CD8-positive, alpha-beta memory T cell (primary cell): ENCODE measurements at regions of chr15 and their contacts with region 1.

Region 1: DNA sequence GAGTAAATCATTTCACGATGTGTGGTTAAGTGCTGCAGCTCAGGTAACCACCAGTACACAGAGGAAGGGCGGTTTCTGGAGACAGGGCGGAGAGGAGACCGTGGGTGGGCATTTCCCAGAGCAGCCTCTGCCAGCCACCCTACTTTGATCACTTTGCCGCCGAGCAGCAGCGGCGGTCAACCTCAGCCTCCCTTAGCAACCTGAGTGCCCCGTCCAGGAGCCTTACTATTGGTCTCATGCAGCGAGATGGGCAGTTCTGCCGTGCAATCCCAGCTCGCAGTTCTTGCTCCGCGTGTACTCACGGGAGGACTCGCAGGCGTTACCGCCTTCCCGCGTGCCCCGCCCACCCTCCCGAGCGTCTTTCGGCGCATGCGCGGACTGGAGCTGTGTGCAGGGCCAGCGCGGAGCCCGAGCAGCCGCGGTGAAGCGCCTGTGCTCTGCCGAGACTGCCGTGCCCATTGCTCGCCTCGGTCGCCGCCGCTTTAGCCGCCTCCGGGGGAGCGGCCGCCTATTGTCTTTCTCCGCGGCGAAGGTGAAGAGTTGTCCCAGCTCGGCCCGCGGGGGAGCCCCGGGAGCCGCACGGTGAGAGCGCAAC is at the start of gene AKAP13:
- DNase-seq: peak; percentile 89 to 97 (median 94)
- H3K4me3 ChIP-seq: peak within 1 kb of the TSS; percentile 51
- H3K4me3 Mint-ChIP-seq: peak within 1 kb of the TSS; percentile 85 to 93 (median 88)
- H3K27ac ChIP-seq: peak within 1 kb of the TSS; percentile 46
- H3K27ac Mint-ChIP-seq: peak within 1 kb of the TSS; percentile 84 to 99 (median 95)
- H3K4me1 ChIP-seq: peaks cover 32% of the 10 kb centered on the region
- H3K4me1 Mint-ChIP-seq: peaks cover 49 to 67% (median 61%) of the 10 kb centered on the region in 3 donors
- H3K27me3 ChIP-seq: no peaks in the 10 kb centered on the region
- H3K27me3 Mint-ChIP-seq: peaks cover 0 to 3% of the 10 kb centered on the region in 2 donors
- total RNA-seq, gene AKAP13: 109 to 113 TPM

Region 2: GRCh38 chr15:85403745-85404144 is 23.4 kb after region 1 on chr15:
- CTCF ChIA-PET with region 1: interaction called, 4 read pairs
- POLR2A ChIA-PET with region 1: interaction called, 15 read pairs
- DNase-seq: no peak
- H3K4me3 ChIP-seq: no peak overlapping the region
- H3K4me3 Mint-ChIP-seq: peak overlapping the region in 1 of 7 donors; percentile 16
- H3K27ac ChIP-seq: no peak overlapping the region
- H3K27ac Mint-ChIP-seq: peak overlapping the region in 6 of 8 donors; percentile 26 to 78 (median 47)
- H3K4me1 ChIP-seq: peaks cover 55% of the 10 kb centered on the region
- H3K4me1 Mint-ChIP-seq: peaks cover 75 to 96% (median 91%) of the 10 kb centered on the region in 3 donors
- H3K27me3 ChIP-seq: no peaks in the 10 kb centered on the region
- H3K27me3 Mint-ChIP-seq: no peaks in the 10 kb centered on the region

Region 3: GRCh38 chr15:85412956-85413854 is 32.9 kb after region 1 on chr15:
- CTCF ChIA-PET with region 1: interaction called, 10 read pairs
- POLR2A ChIA-PET with region 1: interaction called, 13 read pairs
- DNase-seq: peak; percentile 42 to 80 (median 47)
- H3K4me3 ChIP-seq: peak overlapping the region; percentile 11
- H3K4me3 Mint-ChIP-seq: peak overlapping the region; percentile 10 to 78 (median 66)
- H3K27ac ChIP-seq: no peak overlapping the region
- H3K27ac Mint-ChIP-seq: peak overlapping the region; percentile 80 to 92 (median 85)
- H3K4me1 ChIP-seq: peaks cover 27% of the 10 kb centered on the region
- H3K4me1 Mint-ChIP-seq: peaks cover 53 to 83% (median 77%) of the 10 kb centered on the region in 3 donors
- H3K27me3 ChIP-seq: no peaks in the 10 kb centered on the region
- H3K27me3 Mint-ChIP-seq: no peaks in the 10 kb centered on the region